Naive thymus-derived CD4-positive, alpha-beta T cell (primary cell): ENCODE measurements at regions of chr2 and their contacts with region 1.

Region 1: GRCh38 chr2:28594289-28595108 is 98.6 kb downstream of the PLB1 start:
- DNase-seq: peak; percentile 72 to 86 (median 79)
- ATAC-seq: peak; percentile 93
- H3K4me3 ChIP-seq: peak overlapping the region; percentile 33
- H3K4me3 Mint-ChIP-seq: peak overlapping the region; percentile 60 to 83 (median 69)
- H3K27ac ChIP-seq: peak overlapping the region; percentile 71
- H3K27ac Mint-ChIP-seq: peak overlapping the region; percentile 76 to 98 (median 94)
- H3K4me1 ChIP-seq: peaks cover 9 to 15% of the 10 kb centered on the region in 2 donors
- H3K4me1 Mint-ChIP-seq: peaks cover 12 to 25% (median 19%) of the 10 kb centered on the region in 7 donors
- H3K27me3 ChIP-seq: no peaks in the 10 kb centered on the region
- H3K27me3 Mint-ChIP-seq: no peaks in the 10 kb centered on the region

Region 2: DNA sequence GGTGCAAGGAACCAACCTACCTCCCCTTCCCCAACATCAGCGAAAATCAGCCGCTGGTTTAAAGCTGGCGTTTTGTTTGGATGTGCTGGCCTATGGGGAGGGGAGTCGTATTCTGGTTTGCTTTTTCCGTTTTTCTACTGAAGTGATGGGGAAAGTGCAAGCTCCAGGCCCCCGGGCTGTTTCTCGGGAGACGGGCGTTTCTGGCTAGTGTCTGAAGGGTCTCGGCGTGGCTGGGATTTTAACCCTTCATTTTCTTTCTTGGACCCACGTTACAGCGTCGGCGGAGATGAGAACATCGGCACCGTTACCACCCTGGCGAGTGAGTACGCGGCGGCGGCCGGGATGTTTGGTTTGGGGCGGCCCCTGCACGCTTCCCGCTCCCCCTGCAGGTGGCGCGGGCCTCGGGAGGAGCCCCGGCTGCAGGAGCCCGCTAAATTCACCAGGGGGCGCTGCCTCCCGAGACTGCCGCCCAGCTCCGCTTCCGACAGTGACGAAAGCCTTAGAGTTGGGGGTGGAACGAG is 27.9 kb before region 1 on chr2:
- CTCF ChIA-PET with region 1: interaction called, 39 read pairs
- POLR2A ChIA-PET with region 1: interaction called, 9 read pairs
- intact Hi-C with region 1: loop called (anchors 1 kb)
- DNase-seq: peak; percentile 81 to 96 (median 90)
- ATAC-seq: peak; percentile 100
- H3K4me3 ChIP-seq: peak overlapping the region; percentile 74
- H3K4me3 Mint-ChIP-seq: peak overlapping the region; percentile 84 to 95 (median 92)
- H3K27ac ChIP-seq: peak overlapping the region; percentile 84
- H3K27ac Mint-ChIP-seq: peak overlapping the region; percentile 59 to 96 (median 92)
- H3K4me1 ChIP-seq: peaks cover 6 to 12% of the 10 kb centered on the region in 2 donors
- H3K4me1 Mint-ChIP-seq: peaks cover 6 to 24% (median 16%) of the 10 kb centered on the region in 7 donors
- H3K27me3 ChIP-seq: peaks cover 0 to 3% of the 10 kb centered on the region in 2 donors
- H3K27me3 Mint-ChIP-seq: peaks cover 0 to 6% (median 0%) of the 10 kb centered on the region in 5 donors

Region 3: GRCh38 chr2:28610583-28611201 is 16.2 kb after region 1 on chr2:
- CTCF ChIA-PET with region 1: interaction called, 54 read pairs
- POLR2A ChIA-PET with region 1: interaction called, 13 read pairs
- intact Hi-C with region 1: loop called (anchors 1 kb)
- DNase-seq: peak in 1 of 9 donors; percentile 49
- ATAC-seq: no peak
- H3K4me3 ChIP-seq: no peak overlapping the region
- H3K4me3 Mint-ChIP-seq: peak overlapping the region in 1 of 10 donors; percentile 22
- H3K27ac ChIP-seq: no peak overlapping the region
- H3K27ac Mint-ChIP-seq: peak overlapping the region in 7 of 9 donors; percentile 38 to 70 (median 52)
- H3K4me1 ChIP-seq: peaks cover 8 to 34% of the 10 kb centered on the region in 2 donors
- H3K4me1 Mint-ChIP-seq: peaks cover 6 to 43% (median 35%) of the 10 kb centered on the region in 7 donors
- H3K27me3 ChIP-seq: no peaks in the 10 kb centered on the region
- H3K27me3 Mint-ChIP-seq: no peaks in the 10 kb centered on the region

Region 4: GRCh38 chr2:28621172-28622100 is 26.9 kb after region 1 on chr2:
- CTCF ChIA-PET with region 1: interaction called, 54 read pairs
- POLR2A ChIA-PET with region 1: interaction called, 29 read pairs
- intact Hi-C with region 1: loop called (anchors 1 kb)
- DNase-seq: peak; percentile 44 to 96 (median 93)
- ATAC-seq: peak; percentile 94
- H3K4me3 ChIP-seq: peak overlapping the region; percentile 40
- H3K4me3 Mint-ChIP-seq: peak overlapping the region in 9 of 10 donors; percentile 71 to 86 (median 80)
- H3K27ac ChIP-seq: peak overlapping the region; percentile 95
- H3K27ac Mint-ChIP-seq: peak overlapping the region in 5 of 9 donors; percentile 93 to 100 (median 100)
- H3K4me1 ChIP-seq: peaks cover 43 to 86% of the 10 kb centered on the region in 2 donors
- H3K4me1 Mint-ChIP-seq: peaks cover 0 to 96% (median 59%) of the 10 kb centered on the region in 7 donors
- H3K27me3 ChIP-seq: no peaks in the 10 kb centered on the region
- H3K27me3 Mint-ChIP-seq: no peaks in the 10 kb centered on the region

Region 5: GRCh38 chr2:28681158-28681571 is 86.7 kb after region 1 on chr2:
- CTCF ChIA-PET with region 1: interaction called, 9 read pairs
- POLR2A ChIA-PET with region 1: interaction called, 3 read pairs
- intact Hi-C with region 1: loop called (anchors 1 kb)
- DNase-seq: peak; percentile 22 to 73 (median 31)
- ATAC-seq: peak; percentile 95
- H3K4me3 ChIP-seq: no peak overlapping the region
- H3K4me3 Mint-ChIP-seq: peak overlapping the region in 8 of 10 donors; percentile 21 to 71 (median 46)
- H3K27ac ChIP-seq: no peak overlapping the region
- H3K27ac Mint-ChIP-seq: peak overlapping the region; percentile 32 to 90 (median 80)
- H3K4me1 ChIP-seq: peaks cover 10 to 15% of the 10 kb centered on the region in 2 donors
- H3K4me1 Mint-ChIP-seq: peaks cover 26 to 45% (median 30%) of the 10 kb centered on the region in 7 donors
- H3K27me3 ChIP-seq: no peaks in the 10 kb centered on the region
- H3K27me3 Mint-ChIP-seq: no peaks in the 10 kb centered on the region

Region 6: GRCh38 chr2:28810384-28811285 is 216.1 kb after region 1 on chr2 and contains the start of gene SPDYA:
- CTCF ChIA-PET with region 1: interaction called, 6 read pairs
- POLR2A ChIA-PET with region 1: no interaction called
- intact Hi-C with region 1: loop called in 1 of 2 experiments (anchors 1 kb)
- DNase-seq: peak; percentile 65 to 88 (median 77)
- ATAC-seq: peak; percentile 96
- H3K4me3 ChIP-seq: peak within 1 kb of the TSS; percentile 63
- H3K4me3 Mint-ChIP-seq: peak within 1 kb of the TSS; percentile 76 to 94 (median 84)
- H3K27ac ChIP-seq: peak within 1 kb of the TSS; percentile 50
- H3K27ac Mint-ChIP-seq: peak within 1 kb of the TSS; percentile 11 to 73 (median 59)
- H3K4me1 ChIP-seq: peaks cover 5 to 9% of the 10 kb centered on the region in 2 donors
- H3K4me1 Mint-ChIP-seq: peaks cover 7 to 23% (median 16%) of the 10 kb centered on the region in 7 donors
- H3K27me3 ChIP-seq: no peaks in the 10 kb centered on the region
- H3K27me3 Mint-ChIP-seq: peaks cover 0 to 8% (median 0%) of the 10 kb centered on the region in 5 donors
- total RNA-seq, gene SPDYA: 1.3 to 9.8 (median 4.6) TPM